Posterior cingulate gyrus (tissue), 11 donors: ENCODE measurements at regions of chr4 and their contacts with region 1.

Region 1: GRCh38 chr4:99563310-99564186 is at the start of gene TRMT10A:
- DNase-seq: peak; percentile 96 to 100 (median 97)

Region 2: GRCh38 chr4:99633772-99634171 is 70.2 kb after region 1 on chr4:
- intact Hi-C with region 1: no loop called
- DNase-seq: no peak

Region 3: GRCh38 chr4:99894161-99894997 is 330.8 kb after region 1 on chr4 and contains the start of gene LAMTOR3:
- intact Hi-C with region 1: loop called (anchors 2 kb)
- DNase-seq: peak; percentile 85 to 98 (median 90)

Region 4: DNA sequence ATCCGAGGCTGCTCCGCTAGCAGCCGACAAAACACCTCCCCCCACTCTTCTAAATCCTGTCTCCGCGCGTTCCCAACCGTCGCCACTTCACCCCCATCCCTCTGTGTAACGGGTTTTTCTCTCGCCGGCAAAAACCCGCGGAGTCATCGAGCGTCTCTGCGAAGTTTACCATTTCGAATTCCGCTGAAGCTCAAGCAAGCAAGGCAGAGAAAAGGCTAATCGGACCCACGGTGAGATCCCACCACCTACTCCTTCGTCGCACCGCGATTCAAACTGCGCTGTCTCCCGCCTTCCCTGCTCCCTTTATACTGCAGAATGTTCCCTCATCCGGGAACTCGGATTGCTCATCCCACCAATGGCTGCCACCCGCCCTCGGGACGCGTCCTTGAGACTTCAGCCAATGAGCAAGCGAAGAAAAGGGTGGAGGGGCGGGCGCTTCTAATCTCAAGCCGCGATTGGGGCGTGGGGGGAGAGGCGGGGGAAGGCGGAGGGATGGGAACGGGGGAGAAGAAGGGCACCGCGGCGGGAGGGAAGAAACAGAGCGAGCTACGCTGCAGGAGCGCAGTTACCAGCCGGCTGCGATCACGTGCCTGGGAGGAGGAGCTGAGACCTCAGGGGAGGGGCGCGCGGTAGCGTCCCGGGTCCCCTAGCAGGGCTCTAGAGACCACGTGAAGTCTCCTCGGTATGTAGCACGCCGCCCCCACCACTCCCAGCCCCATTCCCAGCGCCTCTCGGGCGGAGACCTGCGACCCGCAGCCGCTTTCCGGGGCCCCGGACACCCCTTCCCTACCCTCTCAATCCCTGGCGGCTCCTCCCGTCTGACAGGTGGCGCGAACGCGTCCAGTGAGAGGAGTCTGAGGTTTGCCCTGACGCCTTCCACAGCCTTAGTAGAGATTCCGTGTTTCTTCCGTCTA is 386.7 kb after region 1 on chr4 and contains the start of gene H2AZ1:
- intact Hi-C with region 1: loop called (anchors 1 kb)
- DNase-seq: peak; percentile 97 to 100 (median 98)